ENCODE measurements at regions of chr1 and their contacts with region 1.

Region 1: DNA sequence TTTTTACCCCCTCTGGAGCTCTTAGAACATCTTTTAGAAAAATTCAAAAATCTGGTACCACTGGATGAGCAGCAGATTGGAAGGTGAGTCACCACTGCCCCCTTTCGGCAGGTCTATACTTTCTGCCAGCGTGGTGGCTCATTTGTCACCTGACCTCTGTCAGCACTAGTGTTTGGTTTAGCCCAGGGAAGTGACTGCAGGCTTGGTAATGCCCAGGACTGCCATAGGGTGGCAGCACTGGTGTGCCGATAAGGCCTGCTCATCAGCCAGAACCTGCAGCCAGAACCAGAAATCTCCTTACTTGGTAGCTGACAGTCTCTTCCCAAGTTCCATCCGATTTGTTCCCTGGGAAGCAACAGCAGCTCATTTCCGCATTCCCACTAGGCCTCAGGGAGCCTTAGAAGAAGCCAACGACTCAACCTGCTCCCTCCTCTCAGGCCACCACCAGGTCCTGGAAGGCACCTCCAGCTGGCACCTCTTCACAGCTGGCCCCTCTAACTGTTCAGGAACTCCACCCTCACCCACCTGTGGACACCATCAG is 6.8 kb downstream of the SMIM12 start:
- DNase-seq: peak in 1 of 2 donors; percentile 92
- H3K4me3 ChIP-seq: no peak overlapping the region
- H3K27ac ChIP-seq: no peak overlapping the region
- H3K4me1 ChIP-seq: peaks cover 31% of the 10 kb centered on the region
- H3K27me3 ChIP-seq: no peaks in the 10 kb centered on the region
- CTCF ChIP-seq: peak; percentile 48 to 93 (median 81)
- POLR2A ChIP-seq: no peak

Region 2: DNA sequence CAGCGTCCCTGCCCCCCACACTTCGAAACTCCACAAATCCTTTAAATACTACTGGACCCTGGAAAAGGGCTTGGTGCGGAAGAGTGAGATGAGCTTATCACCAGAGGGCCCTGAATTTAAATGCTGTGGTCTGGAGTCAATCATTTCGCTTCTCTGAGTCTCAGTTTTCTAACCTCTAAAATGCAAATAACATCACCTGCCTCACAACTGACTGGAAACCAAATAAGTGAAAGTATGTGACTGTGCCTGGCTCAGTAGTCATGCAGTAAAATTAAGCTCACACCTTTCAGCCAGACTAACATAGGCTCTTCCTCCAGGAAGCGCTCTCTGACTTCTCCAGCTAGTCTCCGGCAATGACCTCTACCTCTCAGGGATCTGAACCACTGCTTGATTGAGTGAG is 55.8 kb before region 1 on chr1:
- intact Hi-C with region 1: loop called (anchors 5 kb)
- DNase-seq: no peak
- H3K4me3 ChIP-seq: peak overlapping the region in 1 of 2 donors; percentile 40
- H3K27ac ChIP-seq: peak overlapping the region; percentile 23
- H3K4me1 ChIP-seq: peaks cover 11% of the 10 kb centered on the region
- H3K27me3 ChIP-seq: no peaks in the 10 kb centered on the region
- CTCF ChIP-seq: no peak
- POLR2A ChIP-seq: no peak

Region 3: DNA sequence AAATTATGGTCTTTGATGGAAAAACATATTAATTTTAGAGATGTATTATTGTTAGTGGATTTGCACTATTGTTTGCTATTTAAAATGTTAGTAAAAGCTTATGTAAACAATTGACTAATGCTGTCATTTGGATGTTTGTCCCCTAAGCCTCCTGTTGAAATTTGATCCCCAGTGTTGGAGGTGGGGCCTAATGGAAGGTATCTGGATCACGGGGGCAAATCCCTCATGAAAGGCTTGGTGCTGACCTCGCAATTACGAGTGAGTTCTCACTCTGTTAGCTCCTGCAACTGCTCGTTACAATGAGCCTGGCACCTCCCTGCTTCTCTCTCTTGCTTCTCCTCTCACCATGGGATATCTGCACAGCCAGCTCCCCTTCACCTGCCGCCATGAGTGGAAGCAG is 118.1 kb after region 1 on chr1:
- intact Hi-C with region 1: no loop called
- DNase-seq: no peak
- H3K4me3 ChIP-seq: no peak overlapping the region
- H3K27ac ChIP-seq: no peak overlapping the region
- H3K4me1 ChIP-seq: no peaks in the 10 kb centered on the region
- H3K27me3 ChIP-seq: no peaks in the 10 kb centered on the region
- CTCF ChIP-seq: no peak
- POLR2A ChIP-seq: no peak

Measured in vagina (tissue), 2 donors.